ENCODE measurements at regions of chr6 and their contacts with region 1.

Region 1: GRCh38 chr6:28399350-28400121 is at the start of gene ZSCAN12:
- DNase-seq: peak; percentile 73 to 87 (median 81)
- ATAC-seq: peak; percentile 97
- H3K4me3 ChIP-seq: peak within 1 kb of the TSS; percentile 88
- H3K4me3 Mint-ChIP-seq: peak within 1 kb of the TSS; percentile 84 to 96 (median 92)
- H3K27ac ChIP-seq: peak within 1 kb of the TSS; percentile 74
- H3K27ac Mint-ChIP-seq: peak within 1 kb of the TSS; percentile 77 to 96 (median 93)
- H3K4me1 ChIP-seq: peaks cover 8 to 30% of the 10 kb centered on the region in 2 donors
- H3K4me1 Mint-ChIP-seq: peaks cover 30 to 54% (median 47%) of the 10 kb centered on the region in 7 donors
- H3K27me3 ChIP-seq: no peaks in the 10 kb centered on the region
- H3K27me3 Mint-ChIP-seq: peaks cover 0 to 33% (median 22%) of the 10 kb centered on the region in 5 donors
- total RNA-seq, gene ZSCAN12: 2.9 to 10.3 (median 7.4) TPM

Region 2: GRCh38 chr6:28124102-28124970 is 275.2 kb before region 1 on chr6 and contains the start of gene ZSCAN16:
- CTCF ChIA-PET with region 1: no interaction called
- POLR2A ChIA-PET with region 1: no interaction called
- intact Hi-C with region 1: loop called in 1 of 2 experiments (anchors 1 kb)
- DNase-seq: peak; percentile 43 to 72 (median 59)
- ATAC-seq: peak; percentile 86
- H3K4me3 ChIP-seq: peak within 1 kb of the TSS; percentile 86
- H3K4me3 Mint-ChIP-seq: peak within 1 kb of the TSS; percentile 80 to 98 (median 95)
- H3K27ac ChIP-seq: peak within 1 kb of the TSS; percentile 93
- H3K27ac Mint-ChIP-seq: peak within 1 kb of the TSS; percentile 83 to 99 (median 96)
- H3K4me1 ChIP-seq: peaks cover 12 to 16% of the 10 kb centered on the region in 2 donors
- H3K4me1 Mint-ChIP-seq: peaks cover 35 to 54% (median 48%) of the 10 kb centered on the region in 7 donors
- H3K27me3 ChIP-seq: no peaks in the 10 kb centered on the region
- H3K27me3 Mint-ChIP-seq: no peaks in the 10 kb centered on the region
- total RNA-seq, gene ZSCAN16: 6.4 to 13.9 (median 7.6) TPM

Region 3: DNA sequence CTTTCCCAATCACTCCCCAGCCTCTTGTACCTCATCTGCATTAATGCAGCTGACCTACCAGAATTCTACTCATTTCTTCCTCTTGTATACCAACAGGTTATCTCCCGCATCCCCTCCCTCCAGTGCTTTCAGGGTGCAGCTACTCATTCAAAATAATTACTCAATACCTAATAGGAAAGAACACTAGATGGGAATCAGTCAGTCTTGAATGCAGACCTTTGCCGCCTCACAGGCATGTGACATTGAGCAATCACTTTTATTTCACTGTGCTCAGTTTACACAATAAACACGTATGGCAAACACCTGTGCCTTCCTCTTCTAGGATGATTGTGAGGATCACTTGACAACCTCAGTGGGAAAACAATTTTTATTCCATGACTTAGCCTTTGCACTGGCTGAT is 76.9 kb before region 1 on chr6:
- CTCF ChIA-PET with region 1: no interaction called
- POLR2A ChIA-PET with region 1: no interaction called
- intact Hi-C with region 1: no loop called
- DNase-seq: no peak
- ATAC-seq: no peak
- H3K4me3 ChIP-seq: no peak overlapping the region
- H3K4me3 Mint-ChIP-seq: no peak overlapping the region
- H3K27ac ChIP-seq: no peak overlapping the region
- H3K27ac Mint-ChIP-seq: no peak overlapping the region
- H3K4me1 ChIP-seq: no peaks in the 10 kb centered on the region
- H3K4me1 Mint-ChIP-seq: no peaks in the 10 kb centered on the region
- H3K27me3 ChIP-seq: no peaks in the 10 kb centered on the region
- H3K27me3 Mint-ChIP-seq: peaks cover 0 to 15% (median 11%) of the 10 kb centered on the region in 5 donors

Region 4: GRCh38 chr6:28349892-28350737 is 49.4 kb before region 1 on chr6 and contains the start of gene ZKSCAN3:
- CTCF ChIA-PET with region 1: no interaction called
- POLR2A ChIA-PET with region 1: no interaction called
- intact Hi-C with region 1: loop called (anchors 1 to 2 kb)
- DNase-seq: peak; percentile 53 to 83 (median 80)
- ATAC-seq: peak; percentile 98
- H3K4me3 ChIP-seq: peak within 1 kb of the TSS; percentile 80
- H3K4me3 Mint-ChIP-seq: peak within 1 kb of the TSS; percentile 94 to 100 (median 98)
- H3K27ac ChIP-seq: peak within 1 kb of the TSS; percentile 75
- H3K27ac Mint-ChIP-seq: peak within 1 kb of the TSS; percentile 90 to 97 (median 94)
- H3K4me1 ChIP-seq: peaks cover 0 to 7% of the 10 kb centered on the region in 2 donors
- H3K4me1 Mint-ChIP-seq: peaks cover 28 to 39% (median 35%) of the 10 kb centered on the region in 7 donors
- H3K27me3 ChIP-seq: peaks cover 0 to 4% of the 10 kb centered on the region in 2 donors
- H3K27me3 Mint-ChIP-seq: peaks cover 11 to 30% (median 12%) of the 10 kb centered on the region in 5 donors
- total RNA-seq, gene ZKSCAN3: 3.3 to 13.2 (median 5.8) TPM

Region 5: DNA sequence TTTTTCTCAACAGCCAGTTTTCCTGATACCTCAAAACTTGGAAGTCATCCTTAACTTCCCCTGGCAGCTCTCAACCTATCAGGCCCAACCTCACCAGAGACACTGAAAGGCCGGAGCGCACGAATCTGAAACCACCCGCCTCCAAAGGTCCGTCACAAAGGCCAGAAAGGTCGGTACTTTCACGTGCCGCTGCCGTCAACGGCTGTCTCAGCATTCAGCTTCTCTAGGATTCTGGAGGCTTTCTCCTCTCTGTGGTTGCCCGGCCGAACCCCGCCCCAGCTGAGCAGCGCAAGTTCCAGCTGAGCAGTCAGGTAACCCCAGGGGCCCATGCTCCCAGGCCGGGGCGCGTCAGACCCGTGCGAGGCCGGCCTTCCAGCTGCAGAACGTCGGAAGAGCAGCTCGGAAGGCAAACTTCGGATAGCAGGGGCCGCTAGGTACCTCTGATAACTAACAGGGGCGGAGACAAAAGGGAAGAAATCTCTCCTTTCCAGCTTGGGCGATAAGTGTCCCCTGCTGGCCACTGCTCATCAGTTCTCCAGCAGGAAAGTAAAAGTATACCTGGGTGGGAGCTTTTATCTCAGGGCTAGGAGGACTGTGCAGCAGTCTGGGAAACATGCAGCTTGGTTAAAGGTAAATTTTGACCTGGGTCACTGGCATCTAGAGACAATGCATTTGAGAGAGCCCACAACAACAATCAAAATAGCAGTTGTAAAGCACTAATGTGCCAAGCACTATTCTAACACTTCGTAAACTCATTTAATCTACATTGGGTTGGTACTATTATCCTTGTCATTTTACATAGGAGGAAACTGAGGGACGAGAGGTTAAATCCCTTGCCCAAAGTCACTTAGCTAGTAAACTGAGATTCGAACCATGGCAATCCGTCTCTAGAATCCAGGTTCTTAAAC is 16.0 kb before region 1 on chr6:
- CTCF ChIA-PET with region 1: no interaction called
- POLR2A ChIA-PET with region 1: interaction called, 4 read pairs
- intact Hi-C with region 1: loop called in 1 of 2 experiments (anchors 2 kb)
- DNase-seq: peak in 8 of 9 donors; percentile 7 to 45 (median 24)
- ATAC-seq: peak; percentile 92
- H3K4me3 ChIP-seq: peak overlapping the region; percentile 22
- H3K4me3 Mint-ChIP-seq: peak overlapping the region; percentile 76 to 86 (median 82)
- H3K27ac ChIP-seq: no peak overlapping the region
- H3K27ac Mint-ChIP-seq: peak overlapping the region in 7 of 9 donors; percentile 24 to 83 (median 40)
- H3K4me1 ChIP-seq: no peaks in the 10 kb centered on the region
- H3K4me1 Mint-ChIP-seq: peaks cover 15 to 54% (median 34%) of the 10 kb centered on the region in 7 donors
- H3K27me3 ChIP-seq: no peaks in the 10 kb centered on the region
- H3K27me3 Mint-ChIP-seq: no peaks in the 10 kb centered on the region

Region 6: GRCh38 chr6:28443112-28443773 is 43.7 kb after region 1 on chr6 and contains the start of gene ZSCAN23:
- CTCF ChIA-PET with region 1: no interaction called
- POLR2A ChIA-PET with region 1: no interaction called
- intact Hi-C with region 1: loop called (anchors 1 kb)
- DNase-seq: peak; percentile 59 to 93 (median 88)
- ATAC-seq: peak; percentile 96
- H3K4me3 ChIP-seq: peak within 1 kb of the TSS; percentile 76
- H3K4me3 Mint-ChIP-seq: peak within 1 kb of the TSS; percentile 86 to 98 (median 96)
- H3K27ac ChIP-seq: peak within 1 kb of the TSS; percentile 60
- H3K27ac Mint-ChIP-seq: peak within 1 kb of the TSS; percentile 76 to 97 (median 93)
- H3K4me1 ChIP-seq: peaks cover 13 to 16% of the 10 kb centered on the region in 2 donors
- H3K4me1 Mint-ChIP-seq: peaks cover 15 to 38% (median 32%) of the 10 kb centered on the region in 7 donors
- H3K27me3 ChIP-seq: peaks cover 0 to 6% of the 10 kb centered on the region in 2 donors
- H3K27me3 Mint-ChIP-seq: peaks cover 9 to 36% (median 30%) of the 10 kb centered on the region in 5 donors
- total RNA-seq, gene ZSCAN23: 1.4 to 3.4 (median 2.4) TPM

Region 7: GRCh38 chr6:28489366-28490204 is 90.0 kb after region 1 on chr6:
- CTCF ChIA-PET with region 1: no interaction called
- POLR2A ChIA-PET with region 1: interaction called, 3 read pairs
- intact Hi-C with region 1: loop called (anchors 1 to 2 kb)
- DNase-seq: peak; percentile 25 to 49 (median 39)
- ATAC-seq: peak; percentile 75
- H3K4me3 ChIP-seq: peak overlapping the region; percentile 42
- H3K4me3 Mint-ChIP-seq: peak overlapping the region; percentile 78 to 88 (median 83)
- H3K27ac ChIP-seq: peak overlapping the region; percentile 67
- H3K27ac Mint-ChIP-seq: peak overlapping the region; percentile 75 to 90 (median 82)
- H3K4me1 ChIP-seq: peaks cover 0 to 14% of the 10 kb centered on the region in 2 donors
- H3K4me1 Mint-ChIP-seq: peaks cover 16 to 32% (median 20%) of the 10 kb centered on the region in 7 donors
- H3K27me3 ChIP-seq: peaks cover 0 to 4% of the 10 kb centered on the region in 2 donors
- H3K27me3 Mint-ChIP-seq: peaks cover 17 to 73% (median 63%) of the 10 kb centered on the region in 5 donors

Region 8: DNA sequence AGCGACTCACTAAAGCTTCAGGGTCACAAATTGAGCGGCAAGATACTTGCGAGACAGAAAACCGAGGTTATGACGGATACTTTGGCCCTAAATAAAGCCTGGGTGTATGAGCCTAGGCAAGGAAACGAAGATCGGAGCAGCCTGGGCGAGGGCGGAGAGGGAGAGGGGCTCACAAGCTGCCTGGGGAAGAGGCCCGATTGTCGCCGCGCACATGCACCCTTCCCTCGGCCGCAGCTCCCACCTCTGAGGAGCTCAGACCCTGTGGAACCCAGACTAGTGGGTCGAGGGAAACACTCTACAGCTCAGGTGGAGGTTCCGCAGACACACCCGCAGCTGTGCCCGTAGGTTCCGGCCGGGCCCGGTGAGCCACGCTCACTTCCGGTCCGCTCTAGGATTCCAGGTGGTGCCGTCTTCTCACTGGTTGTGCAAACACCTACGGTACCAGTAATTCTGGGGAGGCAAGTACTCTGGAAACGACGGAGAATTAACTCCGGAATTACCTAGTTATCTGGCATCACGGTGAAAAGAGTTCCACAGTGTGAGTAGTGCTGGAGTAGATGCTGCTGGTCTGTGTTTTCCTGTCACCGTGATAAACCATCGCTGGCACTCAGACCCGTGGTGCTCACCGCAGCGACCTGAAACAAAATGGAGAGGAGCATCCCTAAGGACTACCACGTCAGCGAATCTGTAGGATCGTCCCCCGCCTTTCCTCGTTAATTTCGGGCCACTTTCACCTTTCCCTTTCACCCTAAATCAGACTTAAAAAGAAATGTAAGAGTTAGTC is 187.6 kb after region 1 on chr6:
- CTCF ChIA-PET with region 1: no interaction called
- POLR2A ChIA-PET with region 1: no interaction called
- intact Hi-C with region 1: loop called (anchors 2 to 5 kb)
- DNase-seq: peak; percentile 29 to 70 (median 60)
- ATAC-seq: peak; percentile 77
- H3K4me3 ChIP-seq: peak overlapping the region; percentile 54
- H3K4me3 Mint-ChIP-seq: peak overlapping the region; percentile 82 to 90 (median 88)
- H3K27ac ChIP-seq: no peak overlapping the region
- H3K27ac Mint-ChIP-seq: peak overlapping the region in 8 of 9 donors; percentile 5 to 88 (median 60)
- H3K4me1 ChIP-seq: peaks cover 0 to 9% of the 10 kb centered on the region in 2 donors
- H3K4me1 Mint-ChIP-seq: peaks cover 11 to 43% (median 34%) of the 10 kb centered on the region in 7 donors
- H3K27me3 ChIP-seq: peaks cover 10 to 28% of the 10 kb centered on the region in 2 donors
- H3K27me3 Mint-ChIP-seq: peaks cover 57 to 85% (median 76%) of the 10 kb centered on the region in 5 donors